ENCODE measurements at regions of chr1 and their contacts with region 1.

Region 1: DNA sequence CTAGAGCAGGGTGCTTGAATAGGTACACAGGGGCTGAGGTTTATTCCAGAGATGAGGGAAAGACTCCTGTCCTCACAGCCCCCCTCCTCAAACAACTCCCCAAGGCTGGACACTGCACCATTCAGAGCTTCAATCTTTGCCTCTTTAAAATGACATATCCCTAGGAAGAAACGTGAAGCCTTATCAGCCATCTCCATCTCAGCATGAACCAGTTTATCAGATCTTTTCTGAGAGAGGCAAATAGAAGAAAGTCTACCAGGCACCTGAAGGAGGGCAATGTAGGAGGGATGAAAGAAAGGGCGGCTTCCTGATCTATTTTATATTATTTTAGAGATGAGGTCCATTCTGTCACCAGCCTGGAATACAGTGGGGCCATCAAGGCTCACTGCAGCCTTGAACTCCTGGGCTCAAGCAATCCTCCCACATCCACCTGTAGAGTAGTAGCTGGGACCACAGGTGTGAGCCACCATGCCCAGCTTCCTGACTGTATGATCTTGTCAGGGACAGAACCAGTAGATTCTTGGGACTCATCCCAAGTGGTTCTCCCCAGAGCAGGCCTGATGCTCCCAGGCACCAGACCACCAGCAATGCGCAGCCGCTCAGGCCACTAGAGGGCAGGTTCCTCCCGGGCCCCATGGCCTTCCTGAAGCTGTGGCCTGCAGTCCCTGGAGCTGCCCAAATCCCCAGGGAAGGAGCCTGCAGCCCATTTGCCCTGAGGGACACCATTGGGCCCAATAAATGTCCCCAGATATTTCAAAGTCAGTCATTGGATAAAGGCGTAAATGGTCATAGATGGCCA is 44.4 kb upstream of the GOLT1A start:
- DNase-seq: peak; percentile 80
- H3K4me3 Mint-ChIP-seq: no peak overlapping the region
- H3K27ac Mint-ChIP-seq: peak overlapping the region; percentile 49
- H3K4me1 Mint-ChIP-seq: peaks cover 13% of the 10 kb centered on the region
- H3K27me3 Mint-ChIP-seq: no peaks in the 10 kb centered on the region
- CTCF ChIP-seq: peak; percentile 97

Region 2: DNA sequence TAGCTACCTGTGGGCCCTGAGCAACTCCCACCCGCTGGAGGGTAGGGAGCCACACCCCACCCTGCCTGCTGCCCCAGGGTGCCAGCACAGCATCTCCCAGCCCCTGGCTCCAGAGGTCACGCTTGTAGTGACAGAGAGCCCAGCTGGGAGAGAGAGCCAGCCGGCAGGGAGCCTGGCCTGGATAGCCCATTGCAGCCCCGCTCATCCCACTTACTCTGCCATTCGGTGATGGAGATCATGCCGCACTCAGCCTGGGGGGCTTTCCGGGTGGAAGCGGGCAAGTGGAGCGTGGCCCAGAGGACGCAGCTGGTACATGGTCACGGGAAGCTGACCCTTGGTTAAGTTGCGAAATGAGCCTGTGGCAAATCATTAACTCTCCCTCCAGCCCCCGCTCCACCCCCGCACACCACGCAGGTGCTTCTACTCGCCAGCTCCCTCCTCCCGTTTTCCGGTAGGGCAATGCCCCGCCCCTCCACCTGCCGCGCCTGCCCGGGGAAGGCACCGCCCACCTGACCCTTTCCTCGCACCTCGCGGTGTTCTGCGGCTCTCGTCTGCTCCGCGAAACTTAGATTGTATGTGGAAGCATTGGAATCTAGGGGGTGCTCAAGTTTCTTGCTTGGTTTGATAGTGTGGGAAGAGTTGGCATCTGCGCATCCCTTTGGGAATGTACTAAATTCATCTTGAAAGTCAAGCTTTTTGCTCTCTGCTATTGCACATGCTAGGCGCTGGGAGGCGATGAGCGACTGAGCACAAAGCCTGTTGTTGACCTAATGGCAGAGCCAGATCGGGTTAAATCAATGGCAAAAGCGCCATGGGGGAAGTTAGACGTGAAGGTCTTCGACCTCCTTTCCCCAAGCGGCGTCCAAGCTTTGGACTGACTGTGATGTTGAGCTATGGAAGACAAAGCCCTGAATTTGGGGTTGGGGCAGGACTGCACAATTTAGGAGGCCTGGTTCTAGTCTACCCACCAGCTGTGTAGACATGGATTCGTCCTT is 44.2 kb before region 1 on chr1 and contains the start of gene GOLT1A:
- CTCF ChIA-PET with region 1: interaction called, 8 read pairs
- POLR2A ChIA-PET with region 1: no interaction called
- intact Hi-C with region 1: loop called (anchors 2 kb)
- DNase-seq: peak; percentile 93
- H3K4me3 Mint-ChIP-seq: peak within 1 kb of the TSS; percentile 68
- H3K27ac Mint-ChIP-seq: peak within 1 kb of the TSS; percentile 8
- H3K4me1 Mint-ChIP-seq: peaks cover 6% of the 10 kb centered on the region
- H3K27me3 Mint-ChIP-seq: no peaks in the 10 kb centered on the region
- CTCF ChIP-seq: peak; percentile 93
- total RNA-seq, gene GOLT1A: 11.5 and 12.7 TPM in 2 replicates

Region 3: DNA sequence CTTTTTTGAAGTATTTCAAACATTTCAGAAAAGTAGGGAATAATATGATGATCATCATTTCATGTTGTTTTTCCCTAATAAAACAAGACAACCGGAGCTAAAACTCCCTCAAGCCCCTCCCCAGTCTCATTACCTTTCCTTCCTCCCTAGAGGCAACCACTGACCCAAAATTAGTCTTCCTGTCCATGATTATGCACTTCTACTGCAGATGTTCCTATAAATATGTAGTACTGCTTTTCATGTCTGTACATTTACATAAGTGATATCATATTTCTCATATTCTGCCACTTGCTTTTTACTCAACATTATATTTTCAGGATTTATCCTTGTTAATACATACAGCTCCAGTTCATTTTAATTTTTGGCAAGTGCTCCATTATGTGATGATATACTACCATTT is 14.4 kb after region 1 on chr1:
- CTCF ChIA-PET with region 1: interaction called, 62 read pairs
- POLR2A ChIA-PET with region 1: interaction called, 5 read pairs
- intact Hi-C with region 1: no loop called
- DNase-seq: no peak
- H3K4me3 Mint-ChIP-seq: no peak overlapping the region
- H3K27ac Mint-ChIP-seq: no peak overlapping the region
- H3K4me1 Mint-ChIP-seq: peaks cover 7% of the 10 kb centered on the region
- H3K27me3 Mint-ChIP-seq: no peaks in the 10 kb centered on the region
- CTCF ChIP-seq: no peak

Region 4: DNA sequence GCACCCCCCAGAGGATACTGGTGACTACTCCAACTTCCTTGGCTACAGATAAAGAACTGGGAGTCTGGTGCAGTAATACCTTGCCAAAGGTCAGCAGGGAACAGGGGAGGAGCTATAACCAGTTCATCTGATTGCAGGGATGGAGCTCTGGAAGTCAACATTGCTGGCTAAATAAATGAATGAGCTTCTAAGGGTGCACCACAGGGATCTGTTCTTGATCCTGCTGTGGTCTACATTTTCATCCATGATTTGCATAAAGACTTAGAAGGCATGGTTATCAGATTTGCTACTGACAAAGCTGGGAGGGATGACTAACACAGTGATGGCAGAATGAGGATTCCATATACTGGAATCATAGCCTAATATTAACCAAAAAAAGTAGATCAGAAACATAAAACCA is 83.2 kb after region 1 on chr1:
- CTCF ChIA-PET with region 1: interaction called, 25 read pairs
- POLR2A ChIA-PET with region 1: interaction called, 3 read pairs
- intact Hi-C with region 1: no loop called
- DNase-seq: no peak
- H3K4me3 Mint-ChIP-seq: no peak overlapping the region
- H3K27ac Mint-ChIP-seq: no peak overlapping the region
- H3K4me1 Mint-ChIP-seq: peaks cover 12% of the 10 kb centered on the region
- H3K27me3 Mint-ChIP-seq: no peaks in the 10 kb centered on the region
- CTCF ChIP-seq: no peak

Region 5: DNA sequence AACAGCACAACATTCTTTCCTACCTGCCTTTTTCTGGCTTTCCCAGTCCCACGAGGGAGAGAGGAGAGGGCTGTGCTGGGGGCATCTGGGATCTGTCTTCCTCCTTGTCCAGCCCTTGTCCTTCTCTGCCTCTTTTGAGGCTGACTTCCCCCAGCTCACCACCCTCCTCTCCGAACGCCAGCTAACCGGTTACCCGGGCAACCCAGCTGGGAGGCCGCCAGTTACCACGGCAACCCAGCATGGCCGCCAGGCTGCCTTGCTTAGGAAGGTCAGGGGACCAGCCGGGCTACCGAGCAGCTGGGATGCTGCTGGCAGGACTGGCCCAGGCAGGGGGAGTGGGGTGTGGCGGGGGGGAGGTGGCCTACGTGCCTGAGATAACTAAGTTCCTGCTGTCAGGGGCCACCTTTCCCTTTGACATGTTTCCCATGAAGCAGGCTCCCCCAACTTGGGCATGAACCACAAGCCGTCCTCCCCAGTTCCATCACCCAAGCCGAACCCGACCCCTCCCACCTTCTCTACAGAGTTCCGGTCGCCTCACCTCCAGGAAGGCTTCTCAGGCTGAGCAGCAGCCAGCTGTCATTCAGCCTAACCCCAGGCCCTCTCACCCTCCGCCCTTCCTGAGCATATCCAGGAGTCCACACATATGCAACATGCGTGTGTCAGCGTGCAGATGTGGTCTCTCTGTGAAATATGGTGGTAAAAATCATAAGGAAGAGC is 92.9 kb after region 1 on chr1:
- CTCF ChIA-PET with region 1: interaction called, 15 read pairs
- POLR2A ChIA-PET with region 1: no interaction called
- intact Hi-C with region 1: no loop called
- DNase-seq: no peak
- H3K4me3 Mint-ChIP-seq: no peak overlapping the region
- H3K27ac Mint-ChIP-seq: no peak overlapping the region
- H3K4me1 Mint-ChIP-seq: no peaks in the 10 kb centered on the region
- H3K27me3 Mint-ChIP-seq: no peaks in the 10 kb centered on the region
- CTCF ChIP-seq: no peak